ENCODE measurements at regions of chr18 and their contacts with region 1.

Region 1: GRCh38 chr18:74661691-74662090 is 64.0 kb downstream of the ZNF407 start:
- DNase-seq: no peak
- ATAC-seq: no peak
- H3K4me3 ChIP-seq: no peak overlapping the region
- H3K27ac ChIP-seq: no peak overlapping the region
- H3K4me1 ChIP-seq: peaks cover 10% of the 10 kb centered on the region; the same call in 1 of the 2 replicates
- H3K27me3 ChIP-seq: no peaks in the 10 kb centered on the region
- CTCF ChIP-seq: no peak
- EP300 ChIP-seq: no peak
- POLR2A ChIP-seq: no peak
- RAD21 ChIP-seq: no peak

Region 2: DNA sequence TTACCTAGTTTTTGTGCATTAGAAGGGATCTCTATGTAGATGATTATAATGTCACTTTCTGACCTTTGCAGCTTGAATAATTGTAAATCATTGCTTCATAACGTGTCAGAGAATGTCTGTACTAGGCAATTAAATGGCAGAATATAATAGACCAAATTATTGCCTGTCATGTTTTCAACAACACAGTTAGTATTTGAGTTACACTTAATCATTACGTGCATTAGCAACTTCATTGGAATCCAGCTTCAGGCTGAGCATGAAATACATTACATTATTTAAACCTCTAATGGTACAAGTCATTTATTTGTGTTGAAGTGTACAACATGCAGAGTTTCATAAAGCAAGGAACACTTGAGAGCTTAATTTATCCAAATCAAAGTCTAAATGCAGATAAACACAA is 16.0 kb before region 1 on chr18:
- CTCF ChIA-PET with region 1: no interaction called
- POLR2A ChIA-PET with region 1: no interaction called
- in situ Hi-C with region 1: no loop called
- intact Hi-C with region 1: no loop called
- DNase-seq: no peak
- ATAC-seq: no peak
- H3K4me3 ChIP-seq: no peak overlapping the region
- H3K27ac ChIP-seq: no peak overlapping the region
- H3K4me1 ChIP-seq: no peaks in the 10 kb centered on the region
- H3K27me3 ChIP-seq: no peaks in the 10 kb centered on the region
- CTCF ChIP-seq: no peak
- EP300 ChIP-seq: no peak
- POLR2A ChIP-seq: no peak
- RAD21 ChIP-seq: no peak

Region 3: GRCh38 chr18:74709452-74709851 is 47.8 kb after region 1 on chr18:
- CTCF ChIA-PET with region 1: no interaction called
- POLR2A ChIA-PET with region 1: no interaction called
- in situ Hi-C with region 1: no loop called
- intact Hi-C with region 1: loop called (anchors 5 kb)
- DNase-seq: no peak
- ATAC-seq: no peak
- H3K4me3 ChIP-seq: no peak overlapping the region
- H3K27ac ChIP-seq: no peak overlapping the region
- H3K4me1 ChIP-seq: peaks cover 47% of the 10 kb centered on the region
- H3K27me3 ChIP-seq: no peaks in the 10 kb centered on the region
- CTCF ChIP-seq: no peak
- EP300 ChIP-seq: no peak
- POLR2A ChIP-seq: no peak
- RAD21 ChIP-seq: no peak

Region 4: GRCh38 chr18:74745633-74746403 is 84.1 kb after region 1 on chr18:
- CTCF ChIA-PET with region 1: no interaction called
- POLR2A ChIA-PET with region 1: no interaction called
- in situ Hi-C with region 1: no loop called
- intact Hi-C with region 1: no loop called
- DNase-seq: peak; percentile 15
- ATAC-seq: peak; percentile 46; the same call in 2 of the 3 replicates
- H3K4me3 ChIP-seq: no peak overlapping the region
- H3K27ac ChIP-seq: no peak overlapping the region
- H3K4me1 ChIP-seq: peaks cover 6% of the 10 kb centered on the region
- H3K27me3 ChIP-seq: no peaks in the 10 kb centered on the region
- CTCF ChIP-seq: no peak
- EP300 ChIP-seq: no peak
- POLR2A ChIP-seq: no peak
- RAD21 ChIP-seq: no peak

Region 5: GRCh38 chr18:74963820-74964446 is 302.2 kb after region 1 on chr18:
- CTCF ChIA-PET with region 1: interaction called, 4 read pairs
- POLR2A ChIA-PET with region 1: no interaction called
- in situ Hi-C with region 1: loop called (anchors 10 kb)
- intact Hi-C with region 1: loop called (anchors 1 kb)
- DNase-seq: peak; percentile 48
- ATAC-seq: peak; percentile 65
- H3K4me3 ChIP-seq: no peak overlapping the region
- H3K27ac ChIP-seq: no peak overlapping the region
- H3K4me1 ChIP-seq: no peaks in the 10 kb centered on the region
- H3K27me3 ChIP-seq: no peaks in the 10 kb centered on the region
- CTCF ChIP-seq: peak; percentile 51
- EP300 ChIP-seq: no peak
- POLR2A ChIP-seq: no peak
- RAD21 ChIP-seq: no peak

Measured in HepG2 (cell line).